Activated T-helper 1 cell treated with anti-CD3 and anti-CD28 coated beads, Interleukin-12 subunit alpha, Interleukin-12 subunit beta, Interleukin-2, Interleukin-4 antibody, amounts not matched to agents 30 ng/mL and 10 ng/mL and 1 ng/mL, durations not matched to agents 14 hours and 24 hours and 36 hours (primary cell): ENCODE measurements at regions of chr3 and their contacts with region 1.

Region 1: DNA sequence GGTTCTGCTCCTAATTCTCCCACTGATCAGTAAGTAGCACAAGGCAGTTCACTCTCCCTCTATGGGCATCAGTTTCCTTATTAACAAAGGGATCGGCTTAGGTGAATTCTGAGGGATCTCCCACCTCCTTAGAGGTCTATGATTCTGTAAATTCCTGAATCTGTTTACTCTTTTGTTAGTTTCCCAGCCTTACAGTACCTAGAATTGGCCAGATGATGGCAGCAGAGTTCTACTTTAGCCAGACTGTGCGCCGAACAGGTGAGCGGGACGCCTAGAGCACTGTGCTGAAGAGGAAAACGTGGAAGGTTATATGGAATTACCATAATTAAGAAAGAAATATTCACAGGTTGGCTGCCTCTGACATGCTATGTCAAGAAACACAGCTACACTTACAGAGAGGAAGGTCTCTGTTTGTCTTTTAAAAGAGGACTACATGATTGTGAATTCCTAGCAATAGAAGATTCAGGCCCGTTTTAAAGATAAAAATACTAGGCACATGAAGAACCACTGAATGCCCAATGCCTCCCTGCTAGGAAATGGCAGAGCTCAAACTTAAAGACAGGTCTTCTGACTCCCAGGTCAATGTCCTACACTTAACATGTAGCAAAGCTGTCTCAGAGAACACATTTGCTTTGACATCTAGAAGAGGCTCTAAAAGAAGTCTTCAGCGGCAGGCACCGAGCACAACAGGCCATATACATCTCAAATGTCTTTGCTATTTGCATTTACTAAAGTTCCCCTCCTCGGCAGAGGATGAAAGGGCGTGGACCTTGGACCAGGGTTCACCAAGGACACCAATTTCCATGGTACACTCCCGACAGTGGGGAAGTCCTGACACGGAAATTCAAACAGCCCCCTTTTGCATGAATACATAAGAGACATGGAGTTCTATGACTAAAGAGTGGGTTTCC is 259.9 kb downstream of the FGF12 start:
- DNase-seq: peak; percentile 32
- H3K4me3 Mint-ChIP-seq: no peak overlapping the region
- H3K27ac Mint-ChIP-seq: no peak overlapping the region
- H3K4me1 Mint-ChIP-seq: no peaks in the 10 kb centered on the region
- H3K27me3 Mint-ChIP-seq: peaks cover 15% of the 10 kb centered on the region

Region 2: DNA sequence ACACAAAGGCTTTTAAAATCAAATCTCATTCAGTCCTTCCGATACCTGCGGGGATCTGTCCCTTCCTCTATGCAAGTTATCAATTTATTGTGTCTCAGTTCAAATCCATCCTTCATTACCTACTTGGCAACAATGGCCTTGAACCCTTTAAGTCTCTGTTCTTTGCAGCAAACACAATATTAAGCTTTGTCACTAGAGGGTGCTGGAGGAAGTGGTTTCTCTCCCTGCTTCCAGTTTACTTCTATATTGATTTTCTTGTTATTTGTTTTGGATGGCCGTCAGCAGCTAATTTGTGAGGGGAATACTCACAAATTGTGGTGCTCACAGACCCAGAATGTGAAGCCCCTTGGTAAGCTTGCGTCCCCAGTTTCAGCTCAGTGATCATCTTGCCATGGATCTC is 18.4 kb before region 1 on chr3:
- intact Hi-C with region 1: no loop called
- DNase-seq: no peak
- H3K4me3 Mint-ChIP-seq: no peak overlapping the region
- H3K27ac Mint-ChIP-seq: no peak overlapping the region
- H3K4me1 Mint-ChIP-seq: no peaks in the 10 kb centered on the region
- H3K27me3 Mint-ChIP-seq: peaks cover 6% of the 10 kb centered on the region

Region 3: GRCh38 chr3:192802957-192803899 is 335.7 kb after region 1 on chr3:
- intact Hi-C with region 1: loop called (anchors 1 kb)
- DNase-seq: no peak
- H3K4me3 Mint-ChIP-seq: no peak overlapping the region
- H3K27ac Mint-ChIP-seq: no peak overlapping the region
- H3K4me1 Mint-ChIP-seq: peaks cover 11% of the 10 kb centered on the region
- H3K27me3 Mint-ChIP-seq: no peaks in the 10 kb centered on the region

Region 4: GRCh38 chr3:193040836-193041672 is 573.6 kb after region 1 on chr3:
- intact Hi-C with region 1: loop called (anchors 5 kb)
- DNase-seq: no peak
- H3K4me3 Mint-ChIP-seq: no peak overlapping the region
- H3K27ac Mint-ChIP-seq: no peak overlapping the region
- H3K4me1 Mint-ChIP-seq: peaks cover 10% of the 10 kb centered on the region
- H3K27me3 Mint-ChIP-seq: peaks cover 8% of the 10 kb centered on the region